ENCODE measurements at regions of chr21 and their contacts with region 1.

Region 1: DNA sequence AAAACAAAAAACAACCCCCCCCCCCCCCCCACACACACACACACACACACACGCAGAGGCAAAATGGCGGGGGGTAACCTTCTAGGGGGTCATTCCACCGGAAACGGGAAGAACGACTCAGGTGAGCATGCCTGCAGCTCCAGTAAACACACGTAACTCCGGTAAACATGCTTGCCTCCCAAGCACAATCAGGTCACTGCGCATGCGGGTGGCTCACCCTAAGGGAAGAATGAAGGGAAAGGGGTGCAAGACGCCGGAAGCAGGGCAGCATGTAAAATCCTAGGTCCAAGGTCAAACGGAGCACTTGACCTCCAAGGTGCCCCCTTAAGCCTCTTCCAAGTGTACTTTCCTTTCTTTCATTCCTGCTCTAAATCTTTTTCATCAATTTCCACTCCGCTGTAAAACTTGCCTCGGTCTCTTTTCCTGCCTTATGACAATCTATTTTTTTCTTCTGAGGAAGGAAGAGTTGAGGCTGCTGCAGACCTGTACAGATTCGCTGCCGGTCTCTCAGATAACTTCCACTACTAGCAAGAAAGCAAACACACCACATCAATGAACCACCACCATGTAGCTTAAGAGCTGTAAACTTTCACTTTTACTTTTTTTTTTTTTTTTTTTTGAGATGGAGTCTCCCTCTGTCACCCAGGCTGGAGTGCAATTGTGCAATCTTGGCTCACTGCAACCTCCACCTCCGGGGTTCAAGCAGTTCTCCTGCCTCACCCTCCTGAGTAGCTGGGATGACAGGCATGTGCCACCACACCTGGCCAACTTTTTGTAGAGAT is 21.0 kb upstream of the CBR3 start:
- DNase-seq: peak; percentile 56 to 80
- H3K4me3 ChIP-seq: peak overlapping the region; percentile 41
- H3K4me3 Mint-ChIP-seq: peak overlapping the region; percentile 76
- H3K27ac Mint-ChIP-seq: peak overlapping the region; percentile 85
- H3K4me1 ChIP-seq: peaks cover 8% of the 10 kb centered on the region
- H3K4me1 Mint-ChIP-seq: peaks cover 14% of the 10 kb centered on the region
- H3K27me3 ChIP-seq: no peaks in the 10 kb centered on the region
- H3K27me3 Mint-ChIP-seq: no peaks in the 10 kb centered on the region
- CTCF ChIP-seq: no peak

Region 2: DNA sequence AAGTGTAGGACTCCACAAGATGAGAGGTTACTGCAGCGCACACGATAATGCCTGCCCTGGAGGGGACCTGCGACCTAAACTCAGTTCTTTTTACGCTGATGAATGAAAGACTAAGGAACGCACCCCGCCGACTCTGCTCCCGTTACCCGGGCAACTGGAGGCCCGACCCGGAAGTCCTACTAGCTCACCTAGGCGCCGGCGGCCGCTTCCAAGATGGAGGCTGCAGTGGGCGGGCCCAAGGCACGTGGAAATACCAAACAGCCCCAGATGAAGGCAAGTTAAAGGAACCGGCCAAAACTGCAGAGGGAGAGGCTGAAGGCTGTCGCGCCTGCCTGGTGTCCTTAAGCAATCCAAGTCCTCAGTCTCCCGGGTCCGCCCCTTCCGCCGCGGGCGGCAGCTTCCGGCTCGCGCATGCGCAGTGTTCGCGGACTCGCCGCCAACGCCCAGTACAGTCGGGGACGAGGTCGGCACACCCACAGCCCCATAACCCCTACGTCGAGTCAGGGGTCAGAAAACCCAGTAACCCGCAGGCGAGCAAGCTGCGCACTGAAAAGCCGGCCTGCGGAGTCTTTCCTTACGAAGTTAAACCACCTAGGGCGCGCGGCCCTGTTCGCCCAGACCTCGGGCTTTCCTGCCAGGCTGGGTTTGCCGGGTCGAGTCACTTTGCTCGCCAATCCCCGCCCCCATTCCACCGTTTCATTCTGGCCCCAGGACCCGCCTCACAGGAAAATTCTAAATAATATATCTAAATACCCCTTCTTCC is 53.5 kb before region 1 on chr21 and contains the start of gene SETD4:
- CTCF ChIA-PET with region 1: interaction called, 4 read pairs
- POLR2A ChIA-PET with region 1: no interaction called
- intact Hi-C with region 1: loop called (anchors 2 kb)
- DNase-seq: peak; percentile 95 to 96
- H3K4me3 ChIP-seq: peak within 1 kb of the TSS; percentile 68
- H3K4me3 Mint-ChIP-seq: peak within 1 kb of the TSS; percentile 90
- H3K27ac Mint-ChIP-seq: peak within 1 kb of the TSS; percentile 93
- H3K4me1 ChIP-seq: peaks cover 14% of the 10 kb centered on the region; the same call in 1 of the 2 replicates
- H3K4me1 Mint-ChIP-seq: peaks cover 12% of the 10 kb centered on the region
- H3K27me3 ChIP-seq: no peaks in the 10 kb centered on the region
- H3K27me3 Mint-ChIP-seq: no peaks in the 10 kb centered on the region
- CTCF ChIP-seq: no peak
- total RNA-seq, gene SETD4: 24.3 and 28.8 TPM in 2 replicates